Activated CD8-positive, alpha-beta T cell treated with anti-CD3 and anti-CD28 coated beads, Interleukin-2, amount 10 ng/mL, durations not matched to agents 7 days and 5 days (primary cell): ENCODE measurements at regions of chr2 and their contacts with region 1.

Region 1: GRCh38 chr2:196171248-196171871 is at the start of gene STK17B:
- DNase-seq: peak; percentile 98
- ATAC-seq: peak; percentile 66
- H3K4me3 Mint-ChIP-seq: peak within 1 kb of the TSS; percentile 96
- H3K27ac Mint-ChIP-seq: peak within 1 kb of the TSS; percentile 94
- H3K4me1 Mint-ChIP-seq: peaks cover 29% of the 10 kb centered on the region
- H3K27me3 Mint-ChIP-seq: no peaks in the 10 kb centered on the region
- total RNA-seq, gene STK17B: 453 to 469 TPM

Region 2: DNA sequence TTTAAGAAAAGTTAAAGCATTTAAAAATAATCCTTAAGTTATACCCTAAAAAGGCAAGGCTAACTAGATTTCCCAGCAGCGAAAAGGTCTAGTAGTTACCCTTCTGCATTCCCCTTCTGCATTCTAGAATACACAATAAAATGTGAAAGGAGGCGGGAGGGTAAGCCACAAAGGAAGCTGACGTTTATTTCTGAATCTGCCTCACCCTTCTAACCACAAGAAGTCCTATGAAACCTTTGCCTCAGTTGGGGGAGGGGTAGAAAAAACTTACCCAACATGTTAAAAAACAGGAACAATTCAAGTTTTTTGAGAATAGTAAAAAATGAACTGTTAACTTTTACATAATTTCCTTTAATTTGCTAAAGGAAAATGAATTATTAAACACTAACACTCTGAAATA is 11.3 kb before region 1 on chr2:
- CTCF ChIA-PET with region 1: interaction called, 9 read pairs
- POLR2A ChIA-PET with region 1: interaction called, 348 read pairs
- DNase-seq: peak; percentile 88
- ATAC-seq: peak; percentile 35
- H3K4me3 Mint-ChIP-seq: peak overlapping the region; percentile 66
- H3K27ac Mint-ChIP-seq: peak overlapping the region; percentile 82
- H3K4me1 Mint-ChIP-seq: peaks cover 50% of the 10 kb centered on the region
- H3K27me3 Mint-ChIP-seq: no peaks in the 10 kb centered on the region

Region 3: GRCh38 chr2:196200557-196200956 is 29.2 kb after region 1 on chr2:
- CTCF ChIA-PET with region 1: interaction called, 9 read pairs
- POLR2A ChIA-PET with region 1: interaction called, 21 read pairs
- DNase-seq: peak; percentile 63
- ATAC-seq: peak; percentile 99
- H3K4me3 Mint-ChIP-seq: peak overlapping the region; percentile 58
- H3K27ac Mint-ChIP-seq: peak overlapping the region; percentile 76
- H3K4me1 Mint-ChIP-seq: peaks cover 47% of the 10 kb centered on the region
- H3K27me3 Mint-ChIP-seq: no peaks in the 10 kb centered on the region

Region 4: GRCh38 chr2:196233021-196233804 is 61.9 kb after region 1 on chr2:
- CTCF ChIA-PET with region 1: interaction called, 80 read pairs
- POLR2A ChIA-PET with region 1: interaction called, 122 read pairs
- DNase-seq: no peak
- ATAC-seq: no peak
- H3K4me3 Mint-ChIP-seq: peak overlapping the region; percentile 30
- H3K27ac Mint-ChIP-seq: peak overlapping the region; percentile 95
- H3K4me1 Mint-ChIP-seq: peaks cover 93% of the 10 kb centered on the region
- H3K27me3 Mint-ChIP-seq: no peaks in the 10 kb centered on the region

Region 5: GRCh38 chr2:196263181-196263747 is 91.9 kb after region 1 on chr2:
- CTCF ChIA-PET with region 1: interaction called, 26 read pairs
- POLR2A ChIA-PET with region 1: interaction called, 275 read pairs
- DNase-seq: peak; percentile 74
- ATAC-seq: peak; percentile 73
- H3K4me3 Mint-ChIP-seq: peak overlapping the region; percentile 79
- H3K27ac Mint-ChIP-seq: peak overlapping the region; percentile 92
- H3K4me1 Mint-ChIP-seq: peaks cover 84% of the 10 kb centered on the region
- H3K27me3 Mint-ChIP-seq: no peaks in the 10 kb centered on the region

Region 6: GRCh38 chr2:196376984-196377877 is 205.9 kb after region 1 on chr2:
- CTCF ChIA-PET with region 1: no interaction called
- POLR2A ChIA-PET with region 1: no interaction called
- DNase-seq: no peak
- ATAC-seq: no peak
- H3K4me3 Mint-ChIP-seq: no peak overlapping the region
- H3K27ac Mint-ChIP-seq: no peak overlapping the region
- H3K4me1 Mint-ChIP-seq: no peaks in the 10 kb centered on the region
- H3K27me3 Mint-ChIP-seq: no peaks in the 10 kb centered on the region